Panc1 (cell line): ENCODE measurements at regions of chr3 and their contacts with region 1.

Region 1: GRCh38 chr3:149717391-149718056 is 34.8 kb downstream of the COMMD2 start:
- DNase-seq: peak; percentile 74
- ATAC-seq: peak; percentile 86
- H3K4me3 ChIP-seq: peak overlapping the region in 1 of 2 experiments; percentile 0; a peak in 1 of 4 replicates
- H3K27ac ChIP-seq: peak overlapping the region; percentile 80
- H3K4me1 ChIP-seq: peaks cover 8% of the 10 kb centered on the region; the same call in 1 of the 2 replicates
- H3K27me3 ChIP-seq: no peaks in the 10 kb centered on the region
- CTCF ChIP-seq: peak; percentile 83

Region 2: DNA sequence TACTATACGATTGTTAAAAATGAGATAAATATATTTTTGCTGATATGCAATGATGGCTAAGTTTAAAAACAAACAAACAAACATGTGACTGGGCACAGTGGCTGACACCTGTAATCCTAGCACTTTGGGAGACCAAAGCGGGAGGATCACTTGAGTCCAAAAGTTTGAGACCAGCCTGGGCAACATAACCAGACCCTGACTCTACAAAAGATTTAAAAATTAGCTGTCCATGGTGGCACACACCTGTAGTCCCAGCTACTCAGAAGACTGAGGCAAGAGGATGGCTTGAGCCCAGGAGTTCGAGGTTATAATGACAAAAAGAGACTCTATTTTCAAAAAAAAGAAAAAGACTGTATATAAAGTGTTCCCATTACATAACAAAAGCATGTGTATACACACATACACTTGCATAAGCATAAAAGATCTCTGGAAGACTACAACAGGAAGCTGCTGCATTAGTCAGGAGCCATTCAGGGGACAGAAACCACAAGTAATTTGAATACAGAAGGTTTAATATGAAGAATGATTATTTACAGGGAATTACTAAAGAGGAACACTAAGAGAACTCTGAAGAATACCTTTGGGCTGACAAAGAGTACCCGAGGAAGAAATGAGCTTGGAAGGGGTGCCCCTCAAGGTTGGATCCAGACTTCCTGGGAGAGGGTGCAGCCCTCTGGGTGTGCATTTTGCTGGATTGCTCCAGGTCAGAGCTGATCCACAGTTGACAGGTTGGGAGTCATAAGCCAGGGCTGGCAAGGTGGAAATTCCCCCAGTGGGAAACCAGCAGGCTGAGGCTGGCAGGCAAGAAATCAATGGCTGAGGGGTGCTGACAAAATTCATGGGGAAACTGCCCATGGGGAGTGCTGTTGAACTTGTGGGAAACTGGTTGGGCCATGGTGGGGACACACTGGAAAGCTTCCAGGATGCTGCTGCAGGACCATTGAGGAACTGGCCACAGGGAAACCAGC is 374.8 kb before region 1 on chr3:
- CTCF ChIA-PET with region 1: no interaction called
- POLR2A ChIA-PET with region 1: no interaction called
- in situ Hi-C with region 1: no loop called
- intact Hi-C with region 1: no loop called
- DNase-seq: no peak
- ATAC-seq: no peak
- H3K4me3 ChIP-seq: no peak overlapping the region
- H3K27ac ChIP-seq: peak overlapping the region; percentile 100
- H3K4me1 ChIP-seq: peaks cover 28% of the 10 kb centered on the region
- H3K27me3 ChIP-seq: no peaks in the 10 kb centered on the region
- CTCF ChIP-seq: no peak

Region 3: GRCh38 chr3:149512209-149512782 is 205.2 kb before region 1 on chr3:
- CTCF ChIA-PET with region 1: no interaction called
- POLR2A ChIA-PET with region 1: no interaction called
- in situ Hi-C with region 1: no loop called
- intact Hi-C with region 1: loop called (anchors 5 kb)
- DNase-seq: no peak
- ATAC-seq: peak; percentile 69
- H3K4me3 ChIP-seq: no peak overlapping the region
- H3K27ac ChIP-seq: peak overlapping the region; percentile 98
- H3K4me1 ChIP-seq: peaks cover 78% of the 10 kb centered on the region
- H3K27me3 ChIP-seq: no peaks in the 10 kb centered on the region
- CTCF ChIP-seq: peak; percentile 96

Region 4: DNA sequence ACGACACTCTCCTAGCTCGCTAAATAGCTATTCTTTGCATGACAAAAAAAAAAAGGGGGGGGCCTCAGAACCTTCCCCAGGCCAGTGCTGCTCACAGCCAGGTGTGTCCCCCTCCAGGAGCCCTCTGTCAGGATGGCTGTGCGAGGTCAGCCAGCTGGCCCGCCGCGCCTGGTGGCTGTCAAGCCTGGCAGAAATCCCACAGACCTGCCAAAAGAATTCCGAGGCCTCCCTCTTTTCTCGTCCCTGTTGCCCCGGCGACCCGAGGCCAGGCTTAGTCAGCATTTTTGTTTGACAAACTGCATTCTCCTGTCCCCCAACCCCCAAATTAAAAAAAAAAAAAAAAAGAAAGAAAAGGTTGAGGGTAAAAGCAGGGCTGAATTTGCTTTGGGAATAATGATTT is 181.1 kb before region 1 on chr3:
- CTCF ChIA-PET with region 1: no interaction called
- POLR2A ChIA-PET with region 1: no interaction called
- in situ Hi-C with region 1: no loop called
- intact Hi-C with region 1: loop called (anchors 10 kb)
- DNase-seq: no peak
- ATAC-seq: peak; percentile 11; the same call in 1 of the 2 replicates
- H3K4me3 ChIP-seq: peak overlapping the region in 1 of 2 experiments; percentile 2; a peak in 2 of 4 replicates
- H3K27ac ChIP-seq: peak overlapping the region; percentile 100
- H3K4me1 ChIP-seq: peaks cover 100% of the 10 kb centered on the region
- H3K27me3 ChIP-seq: no peaks in the 10 kb centered on the region
- CTCF ChIP-seq: no peak

Region 5: GRCh38 chr3:149936812-149937233 is 219.3 kb after region 1 on chr3:
- CTCF ChIA-PET with region 1: no interaction called
- POLR2A ChIA-PET with region 1: no interaction called
- in situ Hi-C with region 1: no loop called
- intact Hi-C with region 1: no loop called
- DNase-seq: peak; percentile 73
- ATAC-seq: peak; percentile 92
- H3K4me3 ChIP-seq: peak overlapping the region in 1 of 2 experiments; percentile 26; a peak in 1 of 4 replicates
- H3K27ac ChIP-seq: no peak overlapping the region
- H3K4me1 ChIP-seq: peaks cover 5% of the 10 kb centered on the region; the same call in 1 of the 2 replicates
- H3K27me3 ChIP-seq: no peaks in the 10 kb centered on the region
- CTCF ChIP-seq: peak; percentile 91

Region 6: GRCh38 chr3:150094150-150094925 is 376.8 kb after region 1 on chr3:
- CTCF ChIA-PET with region 1: no interaction called
- POLR2A ChIA-PET with region 1: no interaction called
- in situ Hi-C with region 1: no loop called
- intact Hi-C with region 1: no loop called
- DNase-seq: no peak
- ATAC-seq: no peak
- H3K4me3 ChIP-seq: no peak overlapping the region
- H3K27ac ChIP-seq: no peak overlapping the region; the same call in 1 of the 2 replicates
- H3K4me1 ChIP-seq: no peaks in the 10 kb centered on the region
- H3K27me3 ChIP-seq: no peaks in the 10 kb centered on the region
- CTCF ChIP-seq: no peak